Activated B cell treated with CpG ODN at 0.5 μM for 24 hours (primary cell): ENCODE measurements at regions of chr6 and their contacts with region 1.

Region 1: GRCh38 chr6:26375270-26375669 is 7.6 kb upstream of the BTN2A2 start:
- DNase-seq: no peak
- ATAC-seq: peak; percentile 25
- H3K4me3 Mint-ChIP-seq: no peak overlapping the region
- H3K27ac Mint-ChIP-seq: peak overlapping the region; percentile 80
- H3K4me1 Mint-ChIP-seq: peaks cover 42% of the 10 kb centered on the region
- H3K27me3 Mint-ChIP-seq: no peaks in the 10 kb centered on the region
- CTCF ChIP-seq: no peak

Region 2: GRCh38 chr6:26335631-26336323 is 39.5 kb before region 1 on chr6:
- CTCF ChIA-PET with region 1: no interaction called
- POLR2A ChIA-PET with region 1: interaction called, 11 read pairs
- intact Hi-C with region 1: no loop called
- DNase-seq: no peak
- ATAC-seq: no peak
- H3K4me3 Mint-ChIP-seq: no peak overlapping the region
- H3K27ac Mint-ChIP-seq: no peak overlapping the region
- H3K4me1 Mint-ChIP-seq: peaks cover 27% of the 10 kb centered on the region
- H3K27me3 Mint-ChIP-seq: peaks cover 41% of the 10 kb centered on the region
- CTCF ChIP-seq: no peak

Region 3: GRCh38 chr6:26390531-26390930 is 15.3 kb after region 1 on chr6:
- CTCF ChIA-PET with region 1: no interaction called
- POLR2A ChIA-PET with region 1: no interaction called
- intact Hi-C with region 1: no loop called
- DNase-seq: no peak
- ATAC-seq: no peak
- H3K4me3 Mint-ChIP-seq: no peak overlapping the region
- H3K27ac Mint-ChIP-seq: no peak overlapping the region
- H3K4me1 Mint-ChIP-seq: peaks cover 51% of the 10 kb centered on the region
- H3K27me3 Mint-ChIP-seq: no peaks in the 10 kb centered on the region
- CTCF ChIP-seq: no peak